Ovary (tissue), 10 donors: ENCODE measurements at regions of chr1 and their contacts with region 1.

Region 1: GRCh38 chr1:42484382-42484781 is 21.3 kb downstream of the CCDC30 start:
- DNase-seq: no peak
- H3K4me3 ChIP-seq: no peak overlapping the region
- H3K27ac ChIP-seq: no peak overlapping the region
- H3K4me1 ChIP-seq: no peaks in the 10 kb centered on the region
- H3K27me3 ChIP-seq: no peaks in the 10 kb centered on the region
- CTCF ChIP-seq: no peak
- EP300 ChIP-seq: no peak
- POLR2A ChIP-seq: no peak

Region 2: DNA sequence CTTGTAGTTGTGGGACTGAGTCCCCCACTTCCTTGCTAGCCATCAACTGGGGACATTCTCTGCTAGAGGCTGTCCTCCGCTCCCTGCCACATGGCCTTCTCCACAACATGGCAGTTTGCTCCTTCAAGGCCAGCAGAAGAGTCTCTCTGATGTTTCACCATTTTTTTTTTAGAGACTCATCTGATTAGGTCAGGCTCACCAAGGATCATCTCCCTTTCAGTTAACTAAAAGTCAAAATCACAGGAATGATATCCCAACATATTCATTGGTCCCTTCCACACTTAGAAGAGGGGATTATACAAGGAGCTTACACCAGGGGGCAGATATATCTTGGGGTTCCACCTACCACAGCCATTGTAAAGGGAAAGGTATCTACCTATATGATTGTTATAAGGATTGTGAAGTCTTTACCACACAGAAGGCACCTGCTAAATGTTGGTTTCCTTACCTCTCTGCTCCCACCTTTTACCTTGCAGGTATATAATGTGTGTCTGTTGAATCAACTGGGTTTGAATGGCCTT is 80.4 kb before region 1 on chr1:
- intact Hi-C with region 1: no loop called
- DNase-seq: no peak
- H3K4me3 ChIP-seq: no peak overlapping the region
- H3K27ac ChIP-seq: no peak overlapping the region
- H3K4me1 ChIP-seq: no peaks in the 10 kb centered on the region
- H3K27me3 ChIP-seq: no peaks in the 10 kb centered on the region
- CTCF ChIP-seq: no peak
- EP300 ChIP-seq: no peak
- POLR2A ChIP-seq: no peak

Region 3: DNA sequence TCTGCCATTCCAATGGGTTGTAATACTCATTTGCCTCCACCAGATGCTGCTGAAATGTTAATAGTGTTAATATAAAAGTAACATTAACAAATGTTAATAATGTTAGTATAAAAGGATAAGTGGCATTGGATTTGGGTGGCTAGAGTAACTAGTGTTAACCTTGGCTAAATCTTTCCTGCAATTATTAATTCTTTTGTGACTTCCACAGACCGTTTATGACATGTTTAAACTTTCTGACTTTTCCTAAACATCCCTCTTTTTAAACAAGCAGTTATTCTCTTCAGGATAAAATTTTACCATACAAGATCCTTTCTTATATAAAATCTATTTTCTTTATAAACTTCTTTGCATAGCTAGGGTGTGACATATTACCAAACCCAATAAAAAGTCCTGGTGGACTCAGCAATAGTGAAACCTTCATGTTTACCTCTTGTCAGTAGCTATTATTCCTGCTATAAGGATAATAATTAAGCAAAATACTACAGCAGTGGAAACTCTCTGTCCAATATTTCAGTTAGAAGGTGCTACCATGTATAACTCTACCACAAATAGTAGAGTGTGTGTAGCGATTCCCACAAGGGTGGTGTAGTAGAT is 20.2 kb after region 1 on chr1:
- intact Hi-C with region 1: no loop called
- DNase-seq: no peak
- H3K4me3 ChIP-seq: no peak overlapping the region
- H3K27ac ChIP-seq: no peak overlapping the region
- H3K4me1 ChIP-seq: no peaks in the 10 kb centered on the region
- H3K27me3 ChIP-seq: no peaks in the 10 kb centered on the region
- CTCF ChIP-seq: no peak
- EP300 ChIP-seq: no peak
- POLR2A ChIP-seq: no peak

Region 4: GRCh38 chr1:44380666-44381177 is 1896.3 kb after region 1 on chr1:
- intact Hi-C with region 1: loop called in 1 of 4 experiments (anchors 10 kb)
- DNase-seq: no peak
- H3K4me3 ChIP-seq: no peak overlapping the region
- H3K27ac ChIP-seq: no peak overlapping the region
- H3K4me1 ChIP-seq: no peaks in the 10 kb centered on the region
- H3K27me3 ChIP-seq: no peaks in the 10 kb centered on the region
- CTCF ChIP-seq: no peak
- EP300 ChIP-seq: no peak
- POLR2A ChIP-seq: no peak